CD4-positive, alpha-beta T cell (primary cell): ENCODE measurements at regions of chr22 and their contacts with region 1.

Region 1: DNA sequence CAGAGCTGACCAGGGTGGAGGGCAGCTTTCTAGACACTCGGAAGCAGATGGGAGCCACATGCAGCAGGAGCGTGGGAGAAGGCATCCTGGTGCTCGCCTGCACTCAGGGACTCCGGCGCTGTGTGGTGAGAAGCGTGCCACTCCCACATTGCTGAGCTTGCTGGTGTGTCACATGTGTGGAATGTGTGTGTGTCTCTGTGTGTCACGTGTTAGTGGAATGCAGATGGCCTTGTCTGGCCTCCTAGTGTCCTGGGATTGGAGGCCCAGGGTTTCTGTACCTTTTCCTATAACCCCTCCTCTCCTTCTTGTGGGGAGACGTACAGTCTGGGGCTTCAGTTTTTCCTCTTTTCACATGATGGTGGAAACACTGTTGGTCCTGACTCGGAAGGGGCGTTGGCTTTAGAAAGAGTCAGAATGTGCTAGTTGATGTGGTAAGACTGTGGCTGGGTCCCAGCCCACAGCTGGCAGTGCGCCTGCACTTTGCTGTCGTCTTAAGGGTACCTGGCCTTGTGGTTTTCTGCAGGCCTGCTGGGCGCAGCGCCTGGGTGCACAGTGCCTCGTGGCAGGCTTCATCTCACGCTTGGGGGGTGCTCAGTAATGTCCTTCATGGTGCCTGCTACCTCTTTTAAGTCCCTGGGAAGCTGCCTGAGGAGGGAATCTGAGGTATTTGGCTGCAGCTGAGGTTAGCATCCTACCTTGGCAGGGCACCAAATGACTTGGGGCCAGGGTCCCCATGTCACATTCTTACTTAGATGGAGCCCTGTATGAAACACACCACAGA is 61.8 kb downstream of the MED15 start:
- DNase-seq: peak; percentile 74 to 95 (median 84)
- ATAC-seq: peak; percentile 59
- H3K4me3 ChIP-seq: peak overlapping the region; percentile 27
- H3K4me3 Mint-ChIP-seq: peak overlapping the region; percentile 83
- H3K27ac ChIP-seq: peak overlapping the region; percentile 29 to 57
- H3K27ac Mint-ChIP-seq: peak overlapping the region; percentile 93
- H3K4me1 ChIP-seq: peaks cover 87% of the 10 kb centered on the region
- H3K4me1 Mint-ChIP-seq: peaks cover 89% of the 10 kb centered on the region
- H3K27me3 ChIP-seq: no peaks in the 10 kb centered on the region
- H3K27me3 Mint-ChIP-seq: no peaks in the 10 kb centered on the region
- CTCF ChIP-seq: no peak

Region 2: GRCh38 chr22:20507253-20508066 is 61.7 kb before region 1 on chr22 and contains the start of gene MED15:
- CTCF ChIA-PET with region 1: interaction called, 11 read pairs
- POLR2A ChIA-PET with region 1: interaction called, 44 read pairs
- intact Hi-C with region 1: loop called (anchors 2 kb)
- DNase-seq: peak; percentile 77 to 93 (median 84)
- ATAC-seq: peak; percentile 83
- H3K4me3 ChIP-seq: peak within 1 kb of the TSS; percentile 100
- H3K4me3 Mint-ChIP-seq: peak within 1 kb of the TSS; percentile 98
- H3K27ac ChIP-seq: peak within 1 kb of the TSS; percentile 88 to 90
- H3K27ac Mint-ChIP-seq: peak within 1 kb of the TSS; percentile 94
- H3K4me1 ChIP-seq: peaks cover 42% of the 10 kb centered on the region
- H3K4me1 Mint-ChIP-seq: peaks cover 51% of the 10 kb centered on the region
- H3K27me3 ChIP-seq: no peaks in the 10 kb centered on the region
- H3K27me3 Mint-ChIP-seq: no peaks in the 10 kb centered on the region
- CTCF ChIP-seq: no peak
- total RNA-seq, gene MED15: 181 to 191 TPM

Region 3: GRCh38 chr22:20514658-20515406 is 54.3 kb before region 1 on chr22:
- CTCF ChIA-PET with region 1: interaction called, 11 read pairs
- POLR2A ChIA-PET with region 1: interaction called, 3 read pairs
- intact Hi-C with region 1: loop called in 1 of 2 experiments (anchors 5 kb)
- DNase-seq: peak in 1 of 14 experiments; percentile 41
- ATAC-seq: no peak
- H3K4me3 ChIP-seq: no peak overlapping the region
- H3K4me3 Mint-ChIP-seq: peak overlapping the region; percentile 42
- H3K27ac ChIP-seq: no peak overlapping the region
- H3K27ac Mint-ChIP-seq: peak overlapping the region; percentile 24
- H3K4me1 ChIP-seq: peaks cover 78% of the 10 kb centered on the region
- H3K4me1 Mint-ChIP-seq: peaks cover 80% of the 10 kb centered on the region
- H3K27me3 ChIP-seq: no peaks in the 10 kb centered on the region
- H3K27me3 Mint-ChIP-seq: no peaks in the 10 kb centered on the region
- CTCF ChIP-seq: no peak

Region 4: GRCh38 chr22:20523086-20523983 is 45.8 kb before region 1 on chr22:
- CTCF ChIA-PET with region 1: interaction called, 20 read pairs
- POLR2A ChIA-PET with region 1: interaction called, 9 read pairs
- intact Hi-C with region 1: loop called in 1 of 2 experiments (anchors 5 kb)
- DNase-seq: peak in 5 of 14 experiments; percentile 27 to 56 (median 49)
- ATAC-seq: peak; percentile 61
- H3K4me3 ChIP-seq: no peak overlapping the region
- H3K4me3 Mint-ChIP-seq: peak overlapping the region; percentile 68
- H3K27ac ChIP-seq: peak overlapping the region; percentile 37 to 42
- H3K27ac Mint-ChIP-seq: peak overlapping the region; percentile 74
- H3K4me1 ChIP-seq: peaks cover 59% of the 10 kb centered on the region
- H3K4me1 Mint-ChIP-seq: peaks cover 72% of the 10 kb centered on the region
- H3K27me3 ChIP-seq: no peaks in the 10 kb centered on the region
- H3K27me3 Mint-ChIP-seq: no peaks in the 10 kb centered on the region
- CTCF ChIP-seq: no peak

Region 5: DNA sequence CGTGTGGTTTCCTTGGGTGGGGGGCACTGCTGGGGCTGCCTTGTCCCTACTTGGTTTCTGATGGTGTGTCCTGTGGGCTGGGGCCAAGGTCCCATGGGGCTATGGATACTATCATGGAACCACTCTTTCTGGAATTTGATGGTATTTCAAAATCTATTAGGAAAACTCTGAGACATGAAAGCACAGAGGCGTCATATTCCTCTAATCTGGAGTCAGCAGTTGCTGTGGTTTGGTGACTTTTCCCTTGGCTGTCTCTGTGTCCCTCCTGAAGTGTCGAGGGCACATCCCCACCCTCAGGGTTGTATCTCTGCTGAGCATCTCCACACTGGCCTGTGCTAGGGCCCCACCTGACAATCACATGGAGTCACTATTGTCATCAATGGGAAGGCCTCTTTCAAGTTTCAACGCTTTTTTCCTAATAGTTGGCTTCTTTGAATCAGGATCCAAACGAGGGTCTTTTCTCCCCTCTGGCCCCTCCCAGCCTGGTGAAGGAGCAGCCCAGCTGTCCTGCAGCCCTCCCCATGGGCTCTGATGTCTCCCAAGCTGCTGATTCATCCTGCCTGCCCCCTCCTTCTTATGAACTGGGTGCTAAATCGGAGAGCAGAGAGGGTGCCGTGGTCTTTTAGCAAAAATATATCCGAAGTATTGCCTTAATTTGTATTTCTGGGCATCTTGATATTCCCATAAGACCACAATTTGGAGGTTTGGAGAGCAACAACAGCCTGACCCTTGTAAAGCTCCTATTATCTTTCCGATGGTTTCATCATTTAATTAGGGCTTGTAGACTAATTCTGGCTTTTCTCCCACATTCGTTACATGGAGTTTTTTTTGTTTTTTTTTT is 23.3 kb before region 1 on chr22:
- CTCF ChIA-PET with region 1: interaction called, 107 read pairs
- POLR2A ChIA-PET with region 1: interaction called, 343 read pairs
- intact Hi-C with region 1: loop called in 1 of 2 experiments (anchors 2 kb)
- DNase-seq: no peak
- ATAC-seq: no peak
- H3K4me3 ChIP-seq: no peak overlapping the region
- H3K4me3 Mint-ChIP-seq: no peak overlapping the region
- H3K27ac ChIP-seq: peak overlapping the region; percentile 29 to 31
- H3K27ac Mint-ChIP-seq: peak overlapping the region; percentile 91
- H3K4me1 ChIP-seq: peaks cover 70% of the 10 kb centered on the region
- H3K4me1 Mint-ChIP-seq: peaks cover 77% of the 10 kb centered on the region
- H3K27me3 ChIP-seq: no peaks in the 10 kb centered on the region
- H3K27me3 Mint-ChIP-seq: no peaks in the 10 kb centered on the region
- CTCF ChIP-seq: no peak